Activated CD4-positive, alpha-beta memory T cell treated with anti-CD3 and anti-CD28 coated beads for 36 hours (primary cell): ENCODE measurements at regions of chr6 and their contacts with region 1.

Region 1: GRCh38 chr6:46090115-46091079 is 39.4 kb upstream of the ENPP4 start:
- DNase-seq: peak; percentile 73
- H3K4me3 Mint-ChIP-seq: no peak overlapping the region
- H3K27ac Mint-ChIP-seq: no peak overlapping the region
- H3K4me1 Mint-ChIP-seq: no peaks in the 10 kb centered on the region
- H3K27me3 Mint-ChIP-seq: peaks cover 30% of the 10 kb centered on the region

Region 2: DNA sequence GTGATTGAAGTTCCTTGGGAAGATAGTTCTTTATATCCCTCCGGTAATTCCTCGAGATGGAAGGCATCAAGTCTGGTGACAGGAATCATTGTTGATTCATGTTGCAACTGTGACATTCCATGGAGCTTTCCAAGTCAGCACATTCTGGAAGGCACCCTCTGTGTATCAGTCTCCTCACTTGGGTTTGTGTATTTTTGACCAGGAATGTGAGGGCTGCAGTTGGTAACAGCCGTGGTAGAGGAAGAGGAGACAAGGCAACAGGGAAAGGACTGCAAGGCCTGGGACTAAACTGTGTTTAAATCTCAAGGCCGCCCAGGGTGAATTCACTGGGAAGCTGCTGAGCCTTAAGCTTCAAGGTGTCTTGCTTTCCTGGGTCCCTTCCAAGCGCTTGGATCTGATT is 173.7 kb before region 1 on chr6:
- CTCF ChIA-PET with region 1: no interaction called
- POLR2A ChIA-PET with region 1: no interaction called
- intact Hi-C with region 1: no loop called
- DNase-seq: no peak
- H3K4me3 Mint-ChIP-seq: no peak overlapping the region
- H3K27ac Mint-ChIP-seq: no peak overlapping the region
- H3K4me1 Mint-ChIP-seq: peaks cover 18% of the 10 kb centered on the region
- H3K27me3 Mint-ChIP-seq: no peaks in the 10 kb centered on the region

Region 3: DNA sequence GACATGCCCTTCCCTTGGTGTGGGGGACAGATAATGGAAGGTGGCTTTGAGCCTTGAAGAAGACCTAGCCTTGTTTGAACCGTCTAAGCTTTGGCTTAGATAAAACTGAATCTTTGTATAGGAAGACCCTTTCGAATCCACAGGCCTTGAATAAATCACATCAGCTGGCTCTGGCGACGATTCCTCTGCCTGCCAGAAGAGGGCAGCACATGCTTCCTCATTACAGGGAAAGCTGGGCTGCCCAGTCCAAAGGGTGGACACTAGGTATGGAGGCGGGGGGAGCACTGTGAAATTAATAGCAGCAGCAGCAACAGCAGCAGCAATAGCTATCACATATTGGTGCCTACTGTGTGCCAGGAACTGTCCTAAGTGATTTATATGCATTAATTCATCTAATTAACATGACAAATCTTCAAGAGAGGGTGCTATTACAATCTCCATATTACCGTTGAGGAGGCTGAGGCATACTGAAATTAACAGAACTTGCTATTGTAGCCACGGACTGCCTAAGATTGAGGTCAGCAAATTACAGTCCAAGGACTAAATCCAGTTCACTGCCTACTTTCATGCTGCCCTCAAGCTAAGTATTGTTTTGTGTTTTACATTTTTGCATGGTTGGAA is 159.9 kb before region 1 on chr6:
- CTCF ChIA-PET with region 1: interaction called, 7 read pairs
- POLR2A ChIA-PET with region 1: no interaction called
- intact Hi-C with region 1: loop called (anchors 5 kb)
- DNase-seq: peak; percentile 68
- H3K4me3 Mint-ChIP-seq: no peak overlapping the region
- H3K27ac Mint-ChIP-seq: no peak overlapping the region
- H3K4me1 Mint-ChIP-seq: peaks cover 7% of the 10 kb centered on the region
- H3K27me3 Mint-ChIP-seq: no peaks in the 10 kb centered on the region

Region 4: GRCh38 chr6:46062306-46062706 is 28.1 kb before region 1 on chr6:
- CTCF ChIA-PET with region 1: interaction called, 10 read pairs
- POLR2A ChIA-PET with region 1: no interaction called
- intact Hi-C with region 1: no loop called
- DNase-seq: no peak
- H3K4me3 Mint-ChIP-seq: no peak overlapping the region
- H3K27ac Mint-ChIP-seq: no peak overlapping the region
- H3K4me1 Mint-ChIP-seq: no peaks in the 10 kb centered on the region
- H3K27me3 Mint-ChIP-seq: peaks cover 14% of the 10 kb centered on the region

Region 5: DNA sequence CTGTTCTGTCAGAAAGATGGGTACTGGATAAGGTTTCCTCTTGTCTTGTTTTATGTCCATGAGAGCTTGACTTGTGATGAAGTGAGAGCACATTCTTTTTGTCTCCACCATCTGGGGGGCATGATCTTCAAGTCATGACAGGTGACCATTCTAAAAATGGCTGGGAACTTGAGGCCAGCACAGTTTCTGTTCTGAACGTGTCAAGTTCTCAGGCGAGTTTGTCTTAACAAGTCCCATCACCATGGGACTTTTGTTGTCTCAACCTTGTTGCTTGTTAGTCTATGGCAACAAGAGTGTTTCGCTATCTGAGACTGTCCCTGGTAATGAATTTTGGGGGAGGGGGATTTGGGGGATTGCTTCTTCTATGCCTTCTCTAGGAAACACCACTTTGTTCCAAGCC is 13.8 kb after region 1 on chr6:
- CTCF ChIA-PET with region 1: interaction called, 12 read pairs
- POLR2A ChIA-PET with region 1: no interaction called
- intact Hi-C with region 1: no loop called
- DNase-seq: no peak
- H3K4me3 Mint-ChIP-seq: no peak overlapping the region
- H3K27ac Mint-ChIP-seq: no peak overlapping the region
- H3K4me1 Mint-ChIP-seq: peaks cover 22% of the 10 kb centered on the region
- H3K27me3 Mint-ChIP-seq: no peaks in the 10 kb centered on the region

Region 6: GRCh38 chr6:46221222-46221793 is 130.9 kb after region 1 on chr6:
- CTCF ChIA-PET with region 1: interaction called, 13 read pairs
- POLR2A ChIA-PET with region 1: no interaction called
- intact Hi-C with region 1: loop called (anchors 1 kb)
- DNase-seq: no peak
- H3K4me3 Mint-ChIP-seq: no peak overlapping the region
- H3K27ac Mint-ChIP-seq: peak overlapping the region; percentile 73
- H3K4me1 Mint-ChIP-seq: peaks cover 24% of the 10 kb centered on the region
- H3K27me3 Mint-ChIP-seq: no peaks in the 10 kb centered on the region

Region 7: GRCh38 chr6:46419576-46420002 is 329.2 kb after region 1 on chr6:
- CTCF ChIA-PET with region 1: interaction called, 11 read pairs
- POLR2A ChIA-PET with region 1: no interaction called
- intact Hi-C with region 1: no loop called
- DNase-seq: peak; percentile 50
- H3K4me3 Mint-ChIP-seq: no peak overlapping the region
- H3K27ac Mint-ChIP-seq: no peak overlapping the region
- H3K4me1 Mint-ChIP-seq: no peaks in the 10 kb centered on the region
- H3K27me3 Mint-ChIP-seq: peaks cover 17% of the 10 kb centered on the region

Region 8: GRCh38 chr6:46661483-46661882 is 571.1 kb after region 1 on chr6:
- CTCF ChIA-PET with region 1: no interaction called
- POLR2A ChIA-PET with region 1: no interaction called
- intact Hi-C with region 1: no loop called
- DNase-seq: no peak
- H3K4me3 Mint-ChIP-seq: no peak overlapping the region
- H3K27ac Mint-ChIP-seq: no peak overlapping the region
- H3K4me1 Mint-ChIP-seq: no peaks in the 10 kb centered on the region
- H3K27me3 Mint-ChIP-seq: no peaks in the 10 kb centered on the region